ENCODE measurements at regions of chr18 and their contacts with region 1.

Region 1: DNA sequence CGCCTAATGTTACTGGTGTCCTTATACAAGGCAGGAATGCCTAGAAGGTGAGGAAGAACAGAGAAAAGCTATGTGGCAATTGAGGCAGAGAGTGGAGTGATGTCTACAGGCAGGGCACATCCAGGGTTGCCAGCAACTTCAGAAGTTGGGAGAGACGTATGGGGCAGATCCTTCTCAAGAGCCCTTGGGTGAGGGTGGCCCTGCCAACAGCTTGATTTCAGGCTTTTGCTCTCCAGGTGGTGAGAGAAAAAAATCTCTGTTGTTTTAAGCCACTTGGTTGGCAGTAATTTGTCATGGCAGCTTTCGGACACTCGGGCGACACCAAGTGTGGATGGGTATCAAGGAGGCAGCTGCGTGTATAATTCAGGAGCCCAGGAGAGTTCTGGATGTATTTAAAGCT is 217.4 kb upstream of the SMIM21 start:
- DNase-seq: no peak
- H3K4me3 ChIP-seq: no peak overlapping the region
- H3K27ac ChIP-seq: no peak overlapping the region
- H3K27me3 ChIP-seq: no peaks in the 10 kb centered on the region
- CTCF ChIP-seq: no peak

Region 2: DNA sequence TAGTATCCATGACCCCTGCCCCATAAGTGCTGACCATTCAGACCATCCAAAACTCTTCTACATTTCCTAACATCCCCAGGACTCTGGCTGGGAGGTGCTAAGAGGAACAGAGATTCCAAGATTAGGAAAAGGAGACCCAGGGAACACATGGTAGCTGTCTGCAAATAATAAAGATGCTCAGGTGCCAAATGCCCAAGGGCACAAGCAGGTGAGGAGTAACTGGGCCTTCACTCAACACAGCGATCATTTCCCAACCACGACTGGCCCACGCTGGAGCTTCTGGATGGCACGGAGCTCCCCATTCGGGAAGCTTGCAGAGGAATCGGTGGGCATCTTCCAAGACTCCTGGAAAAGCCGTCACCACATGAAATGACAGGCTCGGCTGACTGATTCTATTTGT is 38.6 kb after region 1 on chr18:
- intact Hi-C with region 1: loop called in 1 of 2 experiments (anchors 2 kb)
- DNase-seq: no peak
- H3K4me3 ChIP-seq: no peak overlapping the region
- H3K27ac ChIP-seq: no peak overlapping the region
- H3K27me3 ChIP-seq: peaks cover 0 to 6% (median 0%) of the 10 kb centered on the region in 45 donors
- CTCF ChIP-seq: no peak